CD14-positive monocyte (primary cell): ENCODE measurements at regions of chr2 and their contacts with region 1.

Region 1: DNA sequence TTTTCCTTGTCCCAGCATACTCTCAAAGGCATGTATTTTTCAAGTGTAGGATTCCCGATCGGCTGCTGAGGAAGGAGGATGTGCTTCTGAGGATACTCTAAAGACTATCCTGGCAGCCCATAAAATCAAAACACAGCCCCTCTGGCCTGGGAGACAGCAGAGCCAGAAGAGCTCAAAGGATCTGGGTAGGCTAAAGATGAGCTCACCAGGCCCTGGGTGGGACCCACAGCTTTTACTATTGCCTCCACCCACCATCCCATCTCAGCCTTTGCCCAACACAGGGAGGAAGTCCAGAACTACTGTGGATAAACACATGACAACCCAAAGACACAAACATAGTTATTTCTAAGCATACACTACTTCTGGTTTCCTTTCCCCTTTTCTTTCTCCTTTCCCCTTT is 79.1 kb upstream of the ZFP36L2 start:
- DNase-seq: peak; percentile 82 to 88 (median 86)
- H3K4me3 ChIP-seq: no peak overlapping the region
- H3K4me3 Mint-ChIP-seq: peak overlapping the region; percentile 49 to 58
- H3K27ac ChIP-seq: peak overlapping the region; percentile 96 to 97
- H3K27ac Mint-ChIP-seq: peak overlapping the region; percentile 99 to 100 (median 100)
- H3K4me1 ChIP-seq: peaks cover 48 to 56% of the 10 kb centered on the region in 2 donors
- H3K4me1 Mint-ChIP-seq: peaks cover 62% of the 10 kb centered on the region
- H3K27me3 ChIP-seq: no peaks in the 10 kb centered on the region
- H3K27me3 Mint-ChIP-seq: peaks cover 0 to 5% (median 0%) of the 10 kb centered on the region in 3 donors
- CTCF ChIP-seq: no peak

Region 2: DNA sequence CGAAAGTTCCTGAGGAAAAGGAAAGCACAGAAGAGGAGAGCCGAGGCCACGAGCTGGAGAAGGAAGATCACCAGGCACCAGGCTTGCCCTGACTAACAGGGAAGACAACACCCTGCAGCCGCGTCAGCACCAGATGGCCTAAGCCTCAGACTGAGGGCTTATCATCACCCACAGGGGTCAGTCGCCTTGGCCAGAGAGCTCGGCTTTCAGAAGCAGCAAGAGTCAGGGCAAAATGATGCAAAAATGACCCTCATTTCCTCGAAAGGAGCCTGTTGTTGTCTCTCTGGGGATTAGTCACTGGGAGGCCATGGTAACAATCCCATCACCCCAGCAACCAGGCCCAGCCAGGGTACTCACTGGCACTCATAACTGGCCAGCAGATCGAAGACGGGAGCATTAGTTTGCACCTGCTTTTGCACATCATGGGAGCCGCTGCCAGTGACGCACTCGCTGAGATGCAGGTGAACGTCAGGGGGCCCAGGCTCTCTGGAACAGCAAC is 36.4 kb before region 1 on chr2:
- intact Hi-C with region 1: no loop called
- DNase-seq: peak; percentile 51 to 65 (median 65)
- H3K4me3 ChIP-seq: no peak overlapping the region
- H3K4me3 Mint-ChIP-seq: no peak overlapping the region
- H3K27ac ChIP-seq: peak overlapping the region in 1 of 2 donors; percentile 63
- H3K27ac Mint-ChIP-seq: peak overlapping the region; percentile 77 to 91 (median 90)
- H3K4me1 ChIP-seq: peaks cover 40 to 47% of the 10 kb centered on the region in 2 donors
- H3K4me1 Mint-ChIP-seq: peaks cover 58% of the 10 kb centered on the region
- H3K27me3 ChIP-seq: no peaks in the 10 kb centered on the region
- H3K27me3 Mint-ChIP-seq: peaks cover 0 to 2% (median 0%) of the 10 kb centered on the region in 3 donors
- CTCF ChIP-seq: no peak

Region 3: GRCh38 chr2:43408407-43409160 is 103.1 kb after region 1 on chr2:
- intact Hi-C with region 1: loop called (anchors 10 kb)
- DNase-seq: peak; percentile 90 to 96 (median 96)
- H3K4me3 ChIP-seq: peak overlapping the region in 1 of 3 experiments; percentile 51
- H3K4me3 Mint-ChIP-seq: peak overlapping the region; percentile 35 to 63
- H3K27ac ChIP-seq: peak overlapping the region; percentile 81 to 99
- H3K27ac Mint-ChIP-seq: peak overlapping the region; percentile 95 to 99 (median 98)
- H3K4me1 ChIP-seq: peaks cover 52 to 70% of the 10 kb centered on the region in 2 donors
- H3K4me1 Mint-ChIP-seq: peaks cover 65% of the 10 kb centered on the region
- H3K27me3 ChIP-seq: no peaks in the 10 kb centered on the region
- H3K27me3 Mint-ChIP-seq: no peaks in the 10 kb centered on the region
- CTCF ChIP-seq: no peak

Region 4: DNA sequence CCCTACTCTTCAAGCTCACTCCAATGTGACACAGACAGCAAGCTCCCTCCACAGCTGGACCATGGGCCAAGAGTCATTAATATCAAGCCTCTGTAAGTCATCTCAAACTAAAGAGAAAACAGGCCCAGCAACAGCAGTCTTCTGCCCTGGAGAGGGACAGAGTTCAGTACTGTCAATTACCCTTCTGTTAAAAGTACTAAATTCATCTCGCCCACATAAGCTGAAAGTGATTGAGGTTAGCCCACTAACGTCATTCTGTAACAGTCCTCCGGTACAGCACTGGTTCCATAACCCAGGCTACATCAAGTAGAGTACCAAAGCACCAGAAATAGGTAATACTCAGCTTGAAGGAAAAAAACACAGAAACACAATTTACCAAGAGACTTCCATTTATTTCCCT is 264.4 kb after region 1 on chr2:
- intact Hi-C with region 1: no loop called
- DNase-seq: no peak
- H3K4me3 ChIP-seq: no peak overlapping the region
- H3K4me3 Mint-ChIP-seq: no peak overlapping the region
- H3K27ac ChIP-seq: no peak overlapping the region
- H3K27ac Mint-ChIP-seq: no peak overlapping the region
- H3K4me1 ChIP-seq: peaks cover 7 to 13% of the 10 kb centered on the region in 2 donors
- H3K4me1 Mint-ChIP-seq: peaks cover 11% of the 10 kb centered on the region
- H3K27me3 ChIP-seq: no peaks in the 10 kb centered on the region
- H3K27me3 Mint-ChIP-seq: peaks cover 0 to 2% (median 0%) of the 10 kb centered on the region in 3 donors
- CTCF ChIP-seq: no peak